ENCODE measurements at regions of chr4 and their contacts with region 1.

Region 1: DNA sequence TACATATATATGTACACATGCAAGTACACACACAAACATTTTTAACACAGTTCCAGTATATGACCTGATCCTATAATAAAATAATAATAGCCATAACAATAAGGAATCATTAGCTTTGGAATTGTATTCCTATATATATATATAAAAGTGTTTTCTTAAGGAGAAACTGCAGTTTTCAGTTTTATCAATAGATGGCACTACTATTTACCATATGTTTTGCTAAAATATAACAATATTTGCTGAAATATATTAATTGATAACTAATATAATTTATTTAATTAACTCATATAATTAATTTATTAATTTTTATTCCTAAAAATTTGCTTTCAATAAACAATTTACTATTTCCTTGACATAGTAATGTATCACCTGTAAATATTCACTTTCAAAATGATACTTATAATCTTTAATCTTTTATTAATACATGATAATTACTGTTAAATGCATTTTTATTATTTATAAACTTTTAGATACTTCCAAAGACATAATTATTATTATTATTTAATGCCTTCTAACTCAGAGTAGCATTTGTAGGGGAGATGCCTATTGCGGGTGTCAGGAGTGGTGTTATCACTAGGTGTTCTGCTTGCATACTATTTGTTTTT is 599.5 kb downstream of the FSTL5 start:
- DNase-seq: no peak
- ATAC-seq: no peak
- H3K4me3 ChIP-seq: no peak overlapping the region
- H3K27ac ChIP-seq: no peak overlapping the region
- H3K4me1 ChIP-seq: no peaks in the 10 kb centered on the region
- H3K27me3 ChIP-seq: no peaks in the 10 kb centered on the region
- CTCF ChIP-seq: no peak
- EP300 ChIP-seq: no peak
- POLR2A ChIP-seq: no peak
- RAD21 ChIP-seq: no peak

Region 2: GRCh38 chr4:161522031-161522430 is 42.3 kb before region 1 on chr4:
- CTCF ChIA-PET with region 1: no interaction called
- POLR2A ChIA-PET with region 1: no interaction called
- in situ Hi-C with region 1: no loop called
- intact Hi-C with region 1: no loop called
- DNase-seq: no peak
- ATAC-seq: no peak
- H3K4me3 ChIP-seq: no peak overlapping the region
- H3K27ac ChIP-seq: no peak overlapping the region
- H3K4me1 ChIP-seq: no peaks in the 10 kb centered on the region
- H3K27me3 ChIP-seq: no peaks in the 10 kb centered on the region
- CTCF ChIP-seq: no peak
- EP300 ChIP-seq: no peak
- POLR2A ChIP-seq: no peak
- RAD21 ChIP-seq: no peak

Region 3: GRCh38 chr4:161952382-161952781 is 388.1 kb after region 1 on chr4:
- CTCF ChIA-PET with region 1: no interaction called
- POLR2A ChIA-PET with region 1: no interaction called
- in situ Hi-C with region 1: no loop called
- intact Hi-C with region 1: loop called (anchors 2 kb)
- DNase-seq: no peak
- ATAC-seq: no peak
- H3K4me3 ChIP-seq: no peak overlapping the region
- H3K27ac ChIP-seq: no peak overlapping the region
- H3K4me1 ChIP-seq: no peaks in the 10 kb centered on the region
- H3K27me3 ChIP-seq: no peaks in the 10 kb centered on the region
- CTCF ChIP-seq: no peak
- EP300 ChIP-seq: no peak
- POLR2A ChIP-seq: no peak
- RAD21 ChIP-seq: no peak

Measured in HepG2 (cell line).